Breast epithelium (tissue), 4 donors: ENCODE measurements at regions of chr5 and their contacts with region 1.

Region 1: DNA sequence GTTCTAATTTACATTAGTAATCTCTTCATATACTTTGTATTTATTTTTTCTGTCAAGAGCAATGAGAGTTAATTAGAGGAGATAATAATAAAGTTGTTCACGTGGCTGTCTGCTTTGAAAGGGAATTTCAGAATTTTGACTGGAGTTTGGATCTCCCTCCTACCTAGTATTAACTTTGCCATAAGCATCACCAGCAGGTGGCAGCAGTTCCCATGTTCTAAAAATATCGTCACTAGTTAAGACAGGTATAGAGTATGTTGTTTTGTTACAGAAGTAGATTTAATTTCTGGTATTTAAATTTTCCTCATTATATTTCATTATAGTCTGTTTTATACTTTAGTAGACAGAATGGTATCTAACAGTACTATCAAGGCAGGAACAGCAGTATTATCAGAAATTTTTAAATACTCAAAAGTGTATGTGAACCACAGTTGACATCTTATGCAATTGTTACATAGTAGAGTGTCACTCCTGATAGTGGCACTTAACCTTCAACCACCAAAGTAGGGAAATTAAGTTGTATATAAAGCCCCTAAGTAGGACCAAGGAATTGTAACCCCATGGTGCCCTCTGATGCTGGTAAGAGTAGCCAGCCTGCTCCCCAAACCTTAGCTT is 20.4 kb downstream of the GNPDA1 start:
- DNase-seq: peak; percentile 70 to 77
- H3K4me3 ChIP-seq: no peak overlapping the region
- H3K27ac ChIP-seq: no peak overlapping the region
- H3K4me1 ChIP-seq: no peaks in the 10 kb centered on the region
- H3K27me3 ChIP-seq: no peaks in the 10 kb centered on the region
- CTCF ChIP-seq: peak; percentile 37 to 78 (median 74)
- POLR2A ChIP-seq: no peak

Region 2: DNA sequence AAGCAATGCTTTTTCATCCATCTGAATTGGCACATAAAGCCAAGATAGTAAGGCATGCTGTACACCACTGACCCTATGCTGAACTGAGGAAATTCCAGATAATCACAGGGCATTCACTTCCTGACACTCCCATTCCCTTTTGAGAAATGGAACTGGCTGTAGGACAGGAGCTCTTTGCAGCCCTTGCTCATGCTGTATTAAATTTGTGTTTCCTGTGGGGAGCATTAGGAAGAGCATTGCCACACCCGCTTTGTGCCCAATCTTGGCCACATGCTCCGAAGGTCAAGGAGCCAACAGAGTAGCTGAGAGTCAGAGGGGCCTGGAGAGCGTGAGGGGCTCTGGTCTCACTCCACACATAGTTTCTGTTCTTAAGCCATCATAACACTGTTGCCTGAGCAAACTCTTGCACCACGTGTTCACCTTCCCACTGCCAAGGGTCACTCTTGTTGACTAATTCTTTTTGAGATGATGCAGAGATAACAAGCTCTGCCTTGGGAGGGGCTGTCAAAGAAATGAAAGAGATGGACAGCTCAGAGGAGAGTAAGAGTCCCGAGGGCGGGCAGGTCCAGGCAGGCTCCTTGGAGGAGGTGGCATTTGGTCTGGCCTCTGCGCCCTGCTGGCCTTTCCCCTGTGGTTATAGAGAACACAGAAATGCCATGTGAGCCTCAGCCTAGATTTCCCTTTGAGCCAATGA is 278.7 kb before region 1 on chr5:
- intact Hi-C with region 1: no loop called
- DNase-seq: no peak
- H3K4me3 ChIP-seq: no peak overlapping the region
- H3K27ac ChIP-seq: no peak overlapping the region
- H3K4me1 ChIP-seq: no peaks in the 10 kb centered on the region
- H3K27me3 ChIP-seq: no peaks in the 10 kb centered on the region
- CTCF ChIP-seq: no peak
- POLR2A ChIP-seq: no peak

Region 3: DNA sequence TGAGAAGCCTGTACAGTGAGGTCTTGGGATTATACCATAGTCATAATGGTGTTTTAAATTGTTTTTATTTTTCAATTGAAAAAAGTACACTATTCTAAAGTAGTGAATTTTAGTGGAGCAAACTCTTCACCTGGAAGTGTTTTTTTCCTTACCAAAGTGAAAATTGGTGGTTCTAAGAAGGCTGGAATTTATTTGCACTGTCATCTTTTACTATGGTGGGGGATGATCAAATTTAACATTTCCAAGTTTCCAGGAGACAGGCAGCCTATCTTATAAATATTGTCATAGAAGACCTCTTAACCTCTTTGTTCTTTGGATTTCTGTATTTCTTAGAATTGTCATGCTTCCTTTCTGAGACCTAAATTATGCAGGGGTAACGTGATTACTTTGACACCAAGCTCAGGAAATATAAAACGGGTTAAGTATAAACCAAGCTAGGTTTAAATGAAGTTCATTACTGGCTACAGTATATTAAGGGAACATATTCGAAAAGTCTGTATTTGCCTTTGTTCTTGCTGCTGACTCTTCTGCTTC is 136.3 kb after region 1 on chr5:
- intact Hi-C with region 1: loop called (anchors 10 kb)
- DNase-seq: no peak
- H3K4me3 ChIP-seq: no peak overlapping the region
- H3K27ac ChIP-seq: no peak overlapping the region
- H3K4me1 ChIP-seq: no peaks in the 10 kb centered on the region
- H3K27me3 ChIP-seq: no peaks in the 10 kb centered on the region
- CTCF ChIP-seq: no peak
- POLR2A ChIP-seq: no peak